ENCODE measurements at regions of chr6 and their contacts with region 1.

Region 1: GRCh38 chr6:10559522-10560152 is 38.5 kb downstream of the GCNT2 start:
- DNase-seq: no peak
- H3K4me3 ChIP-seq: peak overlapping the region in 1 of 4 donors; percentile 47
- H3K27ac ChIP-seq: peak overlapping the region; percentile 76 to 83 (median 77)
- H3K4me1 ChIP-seq: peaks cover 4 to 55% (median 19%) of the 10 kb centered on the region in 4 donors
- H3K27me3 ChIP-seq: no peaks in the 10 kb centered on the region
- CTCF ChIP-seq: no peak
- EP300 ChIP-seq: no peak
- POLR2A ChIP-seq: no peak

Region 2: DNA sequence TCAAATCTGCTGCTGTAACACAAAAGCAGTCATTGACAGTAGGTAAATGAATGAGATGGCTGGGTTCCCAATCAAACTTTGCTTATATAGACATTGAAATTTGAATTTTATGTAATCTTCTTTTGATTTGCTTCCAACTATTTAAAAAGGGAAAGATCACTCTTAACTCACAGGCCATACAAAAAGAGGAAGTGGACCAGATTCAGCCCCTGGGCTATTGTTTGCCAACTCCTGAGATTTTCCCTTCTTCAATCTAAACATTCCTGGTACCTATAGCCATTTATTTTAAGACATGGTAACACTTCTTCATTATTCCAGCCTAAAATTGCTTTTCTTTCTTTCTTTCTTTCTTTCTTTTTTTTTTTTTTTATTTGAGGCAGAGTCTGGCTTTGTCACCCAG is 405.4 kb before region 1 on chr6:
- in situ Hi-C with region 1: no loop called
- intact Hi-C with region 1: no loop called
- DNase-seq: no peak
- H3K4me3 ChIP-seq: no peak overlapping the region
- H3K27ac ChIP-seq: no peak overlapping the region
- H3K4me1 ChIP-seq: no peaks in the 10 kb centered on the region
- H3K27me3 ChIP-seq: no peaks in the 10 kb centered on the region
- CTCF ChIP-seq: no peak
- EP300 ChIP-seq: no peak
- POLR2A ChIP-seq: no peak

Region 3: GRCh38 chr6:10609995-10610688 is 50.5 kb after region 1 on chr6:
- in situ Hi-C with region 1: no loop called
- intact Hi-C with region 1: loop called (anchors 10 kb)
- DNase-seq: peak; percentile 36
- H3K4me3 ChIP-seq: no peak overlapping the region
- H3K27ac ChIP-seq: peak overlapping the region; percentile 34 to 76 (median 60)
- H3K4me1 ChIP-seq: peaks cover 0 to 20% (median 6%) of the 10 kb centered on the region in 4 donors
- H3K27me3 ChIP-seq: no peaks in the 10 kb centered on the region
- CTCF ChIP-seq: no peak
- EP300 ChIP-seq: no peak
- POLR2A ChIP-seq: no peak

Measured in transverse colon (tissue), 4 donors.